ENCODE measurements at regions of chr10 and their contacts with region 1.

Region 1: GRCh38 chr10:21078410-21079329 is 181.6 kb upstream of the NEBL start:
- DNase-seq: peak; percentile 78 to 84
- H3K4me3 ChIP-seq: no peak overlapping the region
- H3K4me3 Mint-ChIP-seq: no peak overlapping the region
- H3K27ac Mint-ChIP-seq: peak overlapping the region; percentile 23
- H3K4me1 ChIP-seq: 0 out of 2 replicates have a peak, but pooled peaks cover 6% of the 10 kb centered on the region
- H3K4me1 Mint-ChIP-seq: peaks cover 15% of the 10 kb centered on the region
- H3K27me3 ChIP-seq: no peaks in the 10 kb centered on the region
- H3K27me3 Mint-ChIP-seq: no peaks in the 10 kb centered on the region
- CTCF ChIP-seq: peak; percentile 92 to 97

Region 2: DNA sequence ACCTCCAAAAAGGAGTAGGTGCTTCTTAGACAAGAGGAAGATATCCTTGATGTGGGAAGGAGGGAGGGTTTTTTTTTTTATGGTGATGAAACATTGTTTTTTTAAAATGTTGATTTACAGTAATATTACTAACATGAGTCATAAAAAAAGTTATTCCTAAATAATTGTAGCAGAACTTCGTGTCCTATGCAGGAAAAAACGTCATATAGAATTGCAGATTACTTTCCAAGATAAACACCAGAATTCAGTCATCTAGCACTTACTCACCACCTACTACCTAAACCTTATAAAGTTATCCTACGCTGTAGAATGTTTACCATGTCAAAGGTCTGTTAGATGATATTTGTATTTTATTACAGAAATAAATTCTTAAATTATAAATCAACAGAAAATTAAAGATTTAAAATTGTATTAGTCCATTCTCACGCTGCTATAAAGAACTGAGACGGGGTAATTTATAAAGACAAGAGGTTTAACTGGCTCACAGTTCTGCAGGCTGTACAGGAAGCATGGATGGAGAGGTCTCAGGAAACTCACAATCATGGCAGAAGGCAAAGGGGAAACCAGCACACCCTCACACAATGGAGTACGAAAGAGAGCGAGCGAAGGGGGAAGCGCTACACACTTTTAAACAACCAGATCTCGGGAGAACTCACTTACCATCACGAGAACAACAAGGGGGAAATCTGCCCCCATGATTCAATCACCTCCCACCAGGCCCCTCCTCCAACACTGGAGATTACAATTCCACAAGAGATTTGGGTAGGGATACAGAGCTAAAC is 76.4 kb before region 1 on chr10:
- CTCF ChIA-PET with region 1: no interaction called
- POLR2A ChIA-PET with region 1: no interaction called
- intact Hi-C with region 1: no loop called
- DNase-seq: no peak
- H3K4me3 ChIP-seq: no peak overlapping the region
- H3K4me3 Mint-ChIP-seq: no peak overlapping the region
- H3K27ac Mint-ChIP-seq: no peak overlapping the region
- H3K4me1 ChIP-seq: no peaks in the 10 kb centered on the region
- H3K4me1 Mint-ChIP-seq: no peaks in the 10 kb centered on the region
- H3K27me3 ChIP-seq: no peaks in the 10 kb centered on the region
- H3K27me3 Mint-ChIP-seq: no peaks in the 10 kb centered on the region
- CTCF ChIP-seq: no peak

Region 3: DNA sequence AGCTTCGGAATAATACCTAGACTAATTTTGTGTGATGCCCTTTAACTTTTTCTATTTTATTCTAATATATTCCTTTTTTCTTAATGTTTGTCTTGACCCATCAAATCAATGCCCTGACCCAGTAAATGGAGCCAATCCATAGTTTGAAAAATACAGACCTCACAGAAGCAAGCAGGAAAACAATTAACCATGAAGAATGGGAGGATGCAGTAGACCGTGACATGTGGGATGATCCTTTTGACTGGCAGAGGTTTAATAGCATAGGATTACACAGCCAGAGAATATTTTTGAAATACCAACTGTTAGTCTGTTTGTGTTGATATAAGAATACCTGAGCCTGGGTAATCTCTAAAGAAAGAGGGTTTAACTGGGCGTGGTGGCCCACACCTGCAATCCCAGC is 38.9 kb before region 1 on chr10:
- CTCF ChIA-PET with region 1: no interaction called
- POLR2A ChIA-PET with region 1: no interaction called
- intact Hi-C with region 1: no loop called
- DNase-seq: no peak
- H3K4me3 ChIP-seq: no peak overlapping the region
- H3K4me3 Mint-ChIP-seq: no peak overlapping the region
- H3K27ac Mint-ChIP-seq: no peak overlapping the region
- H3K4me1 ChIP-seq: no peaks in the 10 kb centered on the region; the same call in 1 of the 2 replicates
- H3K4me1 Mint-ChIP-seq: no peaks in the 10 kb centered on the region
- H3K27me3 ChIP-seq: no peaks in the 10 kb centered on the region
- H3K27me3 Mint-ChIP-seq: no peaks in the 10 kb centered on the region
- CTCF ChIP-seq: no peak

Region 4: GRCh38 chr10:21135023-21135931 is 56.6 kb after region 1 on chr10:
- CTCF ChIA-PET with region 1: no interaction called
- POLR2A ChIA-PET with region 1: no interaction called
- intact Hi-C with region 1: loop called (anchors 2 kb)
- DNase-seq: no peak
- H3K4me3 ChIP-seq: no peak overlapping the region
- H3K4me3 Mint-ChIP-seq: no peak overlapping the region
- H3K27ac Mint-ChIP-seq: no peak overlapping the region
- H3K4me1 ChIP-seq: peaks cover 9% of the 10 kb centered on the region; the same call in 1 of the 2 replicates
- H3K4me1 Mint-ChIP-seq: peaks cover 35% of the 10 kb centered on the region
- H3K27me3 ChIP-seq: no peaks in the 10 kb centered on the region
- H3K27me3 Mint-ChIP-seq: no peaks in the 10 kb centered on the region
- CTCF ChIP-seq: no peak

Region 5: GRCh38 chr10:21273400-21273932 is 194.8 kb after region 1 on chr10:
- CTCF ChIA-PET with region 1: interaction called, 6 read pairs
- POLR2A ChIA-PET with region 1: no interaction called
- intact Hi-C with region 1: loop called (anchors 1 kb)
- DNase-seq: no peak
- H3K4me3 ChIP-seq: no peak overlapping the region
- H3K4me3 Mint-ChIP-seq: no peak overlapping the region
- H3K27ac Mint-ChIP-seq: no peak overlapping the region
- H3K4me1 ChIP-seq: no peaks in the 10 kb centered on the region
- H3K4me1 Mint-ChIP-seq: peaks cover 10% of the 10 kb centered on the region
- H3K27me3 ChIP-seq: no peaks in the 10 kb centered on the region
- H3K27me3 Mint-ChIP-seq: no peaks in the 10 kb centered on the region
- CTCF ChIP-seq: no peak

Region 6: DNA sequence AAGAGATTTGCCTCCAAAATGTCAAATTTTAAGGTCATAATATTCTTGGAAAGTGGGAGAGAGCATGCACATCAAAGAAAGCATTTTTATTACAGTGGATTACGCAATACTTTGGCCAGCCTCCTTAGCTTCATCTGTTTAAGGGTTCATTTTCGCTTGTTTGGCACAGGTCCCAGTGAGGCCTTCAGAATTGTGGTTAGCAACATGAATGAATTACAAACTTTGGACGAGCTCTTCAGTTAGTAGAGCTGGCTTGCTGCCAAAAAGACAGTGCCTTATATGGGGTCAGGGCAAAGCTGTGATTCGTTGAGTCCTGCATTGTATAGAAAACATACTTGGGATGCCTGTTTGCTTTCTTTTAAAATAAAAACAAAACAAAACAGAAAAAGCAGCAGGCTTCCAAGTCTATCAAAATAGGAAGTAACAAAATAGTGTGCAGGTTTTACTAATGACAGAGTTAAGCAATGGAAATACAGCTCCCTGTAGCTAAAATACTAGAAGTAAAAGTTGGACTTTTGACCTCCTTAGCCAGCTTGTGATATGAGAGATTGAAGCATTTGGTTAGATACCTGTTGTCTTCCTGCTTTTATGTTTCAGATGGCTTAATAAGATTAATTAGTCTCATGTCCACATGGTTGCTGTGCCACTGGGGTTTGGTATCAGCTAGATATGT is 646.2 kb after region 1 on chr10:
- CTCF ChIA-PET with region 1: no interaction called
- POLR2A ChIA-PET with region 1: no interaction called
- intact Hi-C with region 1: no loop called
- DNase-seq: peak; percentile 39 to 65
- H3K4me3 ChIP-seq: no peak overlapping the region
- H3K4me3 Mint-ChIP-seq: no peak overlapping the region
- H3K27ac Mint-ChIP-seq: no peak overlapping the region
- H3K4me1 ChIP-seq: peaks cover 36% of the 10 kb centered on the region
- H3K4me1 Mint-ChIP-seq: peaks cover 35% of the 10 kb centered on the region
- H3K27me3 ChIP-seq: no peaks in the 10 kb centered on the region
- H3K27me3 Mint-ChIP-seq: no peaks in the 10 kb centered on the region
- CTCF ChIP-seq: no peak

Measured in Caco-2 (cell line).